ENCODE measurements at regions of chr4 and their contacts with region 1.

Region 1: DNA sequence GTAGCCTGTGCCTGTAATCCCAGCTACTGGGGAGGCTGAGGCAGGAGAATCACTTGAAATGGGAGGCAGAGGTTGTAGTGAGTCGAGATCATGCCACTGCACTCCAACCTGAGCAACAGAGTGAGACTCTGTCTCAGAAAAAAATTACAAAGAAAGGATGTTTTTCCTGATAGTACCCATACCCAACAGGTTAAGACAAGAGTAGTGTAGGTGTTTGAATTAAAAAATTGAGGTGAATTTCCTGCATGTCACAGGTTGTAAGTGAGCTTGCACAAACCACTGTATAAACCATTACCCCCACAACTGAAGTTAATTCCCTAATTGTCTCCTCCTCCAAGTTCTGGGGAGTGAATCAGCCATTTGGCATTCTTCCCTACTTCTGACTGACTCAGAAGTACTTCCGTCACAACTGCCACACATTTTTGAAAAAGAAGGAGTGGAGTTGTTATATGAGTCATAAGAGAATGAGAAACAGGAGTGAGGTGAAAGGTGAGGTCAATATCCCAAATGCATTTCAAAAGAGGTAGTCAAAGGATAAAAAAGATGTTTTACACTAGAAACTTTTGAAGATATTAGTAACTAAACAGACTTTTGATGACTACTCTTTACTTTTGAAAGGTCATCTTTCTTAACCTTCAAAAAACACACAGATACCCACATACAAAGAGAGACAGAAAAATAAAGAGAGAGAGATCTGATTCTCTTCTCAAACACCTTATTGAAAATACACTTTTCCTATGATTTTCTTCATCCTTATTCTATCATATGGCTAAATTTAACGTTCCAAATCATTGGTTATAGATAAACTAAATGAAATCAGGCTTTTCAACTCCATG is 134.5 kb downstream of the BTC start:
- DNase-seq: peak; percentile 72 to 77
- H3K4me3 ChIP-seq: no peak overlapping the region
- H3K4me3 Mint-ChIP-seq: peak overlapping the region; percentile 61
- H3K27ac Mint-ChIP-seq: peak overlapping the region; percentile 87
- H3K4me1 ChIP-seq: peaks cover 97% of the 10 kb centered on the region
- H3K4me1 Mint-ChIP-seq: peaks cover 72% of the 10 kb centered on the region
- H3K27me3 ChIP-seq: no peaks in the 10 kb centered on the region
- H3K27me3 Mint-ChIP-seq: no peaks in the 10 kb centered on the region
- CTCF ChIP-seq: no peak

Region 2: DNA sequence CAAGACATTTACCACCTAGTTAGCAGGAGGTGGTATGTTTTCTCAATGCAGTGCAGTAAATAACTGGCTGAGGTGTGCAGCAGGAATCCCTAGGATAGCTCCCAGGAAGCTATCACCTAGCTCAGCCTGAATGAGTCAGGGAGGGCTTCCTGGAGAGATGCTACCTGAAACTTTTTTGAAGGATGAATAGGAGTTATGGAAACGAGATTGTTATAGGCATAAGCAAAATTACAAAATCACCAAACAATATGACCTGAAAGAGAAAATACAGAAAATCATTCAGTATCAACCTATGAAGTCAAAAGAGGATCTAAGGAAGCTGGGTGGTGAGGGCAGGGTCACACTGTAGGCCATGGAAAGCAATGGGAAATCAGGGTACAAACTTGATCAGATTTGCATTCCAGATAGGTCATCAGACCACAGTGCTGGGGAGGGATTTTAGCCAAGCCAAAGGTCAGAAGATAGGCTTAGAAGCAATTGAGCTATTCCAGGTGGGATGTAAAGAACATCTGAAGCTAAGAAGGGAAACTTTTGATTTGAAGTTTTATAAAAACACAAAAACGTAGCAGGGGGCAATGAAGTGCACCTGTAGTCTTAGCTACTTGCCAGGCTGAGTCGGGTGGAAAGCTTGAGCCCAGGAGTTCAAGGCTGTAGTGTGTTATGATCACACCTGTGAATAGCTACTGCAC is 203.6 kb before region 1 on chr4:
- CTCF ChIA-PET with region 1: no interaction called
- POLR2A ChIA-PET with region 1: no interaction called
- intact Hi-C with region 1: no loop called
- DNase-seq: no peak
- H3K4me3 ChIP-seq: no peak overlapping the region
- H3K4me3 Mint-ChIP-seq: peak overlapping the region; percentile 4
- H3K27ac Mint-ChIP-seq: peak overlapping the region; percentile 77
- H3K4me1 ChIP-seq: peaks cover 16% of the 10 kb centered on the region; the same call in 1 of the 2 replicates
- H3K4me1 Mint-ChIP-seq: peaks cover 27% of the 10 kb centered on the region
- H3K27me3 ChIP-seq: no peaks in the 10 kb centered on the region
- H3K27me3 Mint-ChIP-seq: no peaks in the 10 kb centered on the region
- CTCF ChIP-seq: no peak

Region 3: GRCh38 chr4:74473155-74473811 is 186.5 kb before region 1 on chr4:
- CTCF ChIA-PET with region 1: no interaction called
- POLR2A ChIA-PET with region 1: no interaction called
- intact Hi-C with region 1: loop called (anchors 10 kb)
- DNase-seq: no peak
- H3K4me3 ChIP-seq: no peak overlapping the region
- H3K4me3 Mint-ChIP-seq: no peak overlapping the region
- H3K27ac Mint-ChIP-seq: no peak overlapping the region
- H3K4me1 ChIP-seq: peaks cover 18% of the 10 kb centered on the region
- H3K4me1 Mint-ChIP-seq: peaks cover 43% of the 10 kb centered on the region
- H3K27me3 ChIP-seq: no peaks in the 10 kb centered on the region
- H3K27me3 Mint-ChIP-seq: no peaks in the 10 kb centered on the region
- CTCF ChIP-seq: no peak

Measured in Caco-2 (cell line).